Activated CD4-positive, alpha-beta T cell treated with anti-CD3 and anti-CD28 coated beads, Interleukin-2, amount 10 ng/mL, durations not matched to agents 7 days and 5 days (primary cell): ENCODE measurements at regions of chr11 and their contacts with region 1.

Region 1: GRCh38 chr11:74929431-74930363 is 19.2 kb downstream of the XRRA1 start:
- DNase-seq: peak; percentile 83
- H3K4me3 Mint-ChIP-seq: no peak overlapping the region
- H3K27ac Mint-ChIP-seq: no peak overlapping the region
- H3K4me1 Mint-ChIP-seq: peaks cover 38% of the 10 kb centered on the region
- H3K27me3 Mint-ChIP-seq: no peaks in the 10 kb centered on the region

Region 2: DNA sequence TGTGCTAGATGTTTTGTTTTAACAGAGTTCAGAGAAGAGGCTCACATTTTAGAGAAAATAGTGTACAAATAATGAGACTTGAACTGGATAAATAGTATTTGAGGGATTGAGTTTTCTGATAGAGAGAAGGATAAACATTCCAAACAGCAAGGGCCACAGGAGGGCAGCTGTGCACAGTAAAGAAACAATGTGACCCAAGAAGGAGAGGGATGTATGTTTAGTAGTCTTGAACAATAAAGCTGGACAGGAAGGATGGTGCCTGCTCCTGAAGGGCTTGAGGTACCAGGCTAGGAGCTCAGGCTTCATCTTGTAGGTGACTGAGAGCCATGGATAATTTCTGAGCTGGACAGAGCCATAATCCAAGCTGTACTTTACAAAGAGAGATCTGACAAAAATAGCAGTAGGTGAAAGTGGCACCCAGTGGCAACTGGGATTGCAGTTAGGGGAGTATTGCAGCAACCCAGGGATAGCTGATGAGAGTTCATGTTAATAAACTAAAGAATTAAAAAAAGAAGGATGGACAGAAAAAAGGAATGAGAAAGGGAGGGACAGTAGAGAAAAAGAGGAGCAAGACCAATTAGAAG is 11.7 kb after region 1 on chr11:
- CTCF ChIA-PET with region 1: interaction called, 27 read pairs
- POLR2A ChIA-PET with region 1: no interaction called
- DNase-seq: no peak
- H3K4me3 Mint-ChIP-seq: no peak overlapping the region
- H3K27ac Mint-ChIP-seq: peak overlapping the region; percentile 2
- H3K4me1 Mint-ChIP-seq: no peaks in the 10 kb centered on the region
- H3K27me3 Mint-ChIP-seq: no peaks in the 10 kb centered on the region

Region 3: GRCh38 chr11:75174781-75175370 is 245.2 kb after region 1 on chr11:
- CTCF ChIA-PET with region 1: no interaction called
- POLR2A ChIA-PET with region 1: no interaction called
- DNase-seq: peak; percentile 49
- H3K4me3 Mint-ChIP-seq: no peak overlapping the region
- H3K27ac Mint-ChIP-seq: peak overlapping the region; percentile 88
- H3K4me1 Mint-ChIP-seq: peaks cover 25% of the 10 kb centered on the region
- H3K27me3 Mint-ChIP-seq: peaks cover 1% of the 10 kb centered on the region